Left cardiac atrium (tissue), 4 donors: ENCODE measurements at regions of chr16 and their contacts with region 1.

Region 1: DNA sequence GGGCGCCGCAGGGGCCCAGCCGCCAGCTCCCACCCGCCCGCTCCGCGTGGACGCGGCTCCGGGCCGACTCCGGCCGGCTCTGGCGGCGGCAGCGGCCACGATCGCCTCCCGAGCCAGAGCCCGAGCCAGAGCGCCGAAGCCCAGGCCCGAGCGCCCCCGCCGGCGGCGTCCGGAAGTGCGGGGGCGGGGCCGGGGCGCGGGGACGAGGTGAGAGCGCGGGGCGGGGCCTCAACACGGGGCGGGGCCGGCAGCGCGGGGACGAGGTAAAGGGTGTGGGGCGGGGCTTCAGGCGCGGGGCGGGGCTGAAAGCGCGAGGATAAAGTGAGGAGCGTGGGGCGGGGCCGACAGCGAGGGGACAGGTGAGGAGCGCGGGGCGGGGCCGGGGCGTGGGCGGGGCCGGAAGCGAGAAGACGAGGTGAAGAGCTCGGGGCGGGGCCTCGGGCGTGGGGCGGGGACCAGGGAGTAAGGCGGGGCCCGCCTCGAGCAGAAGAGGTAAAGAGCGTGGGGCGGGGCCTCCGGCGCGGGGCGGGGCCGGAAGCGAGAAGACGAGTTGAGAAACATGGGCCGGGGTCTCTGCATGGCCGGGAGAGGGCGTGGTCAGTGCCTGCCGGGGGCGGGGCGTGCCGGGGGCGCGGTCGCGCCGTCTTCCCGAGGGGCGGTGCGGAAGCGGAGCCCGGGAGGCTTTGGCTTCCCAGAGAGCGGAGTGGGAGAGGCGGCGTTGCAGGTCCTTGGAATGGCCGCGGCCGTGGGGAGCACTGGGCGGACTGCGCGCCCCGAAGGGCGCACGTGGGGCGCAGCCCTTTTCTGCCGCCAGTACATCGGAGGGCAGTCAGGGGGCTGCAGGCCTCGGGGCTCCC is at the start of gene AXIN1:
- DNase-seq: peak; percentile 100
- ATAC-seq: peak; percentile 94 to 95
- total RNA-seq, gene AXIN1: 10.9 to 12.3 TPM

Region 2: DNA sequence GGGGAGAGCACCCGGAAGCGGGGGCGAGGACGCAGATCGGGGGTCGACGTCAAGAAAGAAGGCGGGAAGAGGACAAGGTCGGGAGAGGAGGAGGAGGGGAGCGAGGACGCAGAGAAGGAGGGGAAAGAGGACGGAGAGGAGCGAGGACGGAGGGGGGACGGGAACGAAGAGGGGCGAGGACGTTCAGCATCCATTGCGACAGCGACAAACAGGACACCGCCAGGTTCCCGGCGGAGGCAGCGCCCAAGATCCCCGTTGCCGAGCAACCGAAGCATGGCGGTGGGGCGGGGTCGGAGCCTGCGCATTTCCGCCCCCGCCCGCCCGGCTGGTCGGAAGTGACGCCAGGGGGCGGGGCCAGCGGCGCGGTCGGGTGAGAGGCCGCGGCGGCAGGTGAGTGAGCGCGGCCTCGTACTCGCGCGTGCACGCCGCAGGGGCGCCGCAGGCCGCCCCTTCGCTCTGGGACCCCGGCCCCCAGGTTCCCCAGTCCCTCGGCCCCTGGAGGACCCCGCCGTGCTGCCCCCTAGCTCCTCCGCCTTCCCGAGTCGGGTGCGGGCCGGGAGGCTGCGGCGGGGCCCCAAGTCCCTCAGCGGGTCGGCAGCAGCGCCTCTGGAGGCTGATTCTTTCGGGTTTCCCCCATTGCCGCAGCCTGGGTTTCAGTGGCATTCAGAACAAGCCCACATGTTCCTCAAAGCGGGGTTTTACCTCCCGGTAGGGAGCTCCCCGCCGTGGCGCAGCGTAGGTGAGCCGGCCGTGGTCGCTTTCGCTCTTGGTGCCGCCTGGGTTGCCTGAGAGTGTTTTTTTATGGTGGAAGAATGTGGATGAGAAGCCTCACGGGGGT is 118.1 kb before region 1 on chr16 and contains the start of gene FAM234A:
- intact Hi-C with region 1: loop called in 1 of 2 experiments (anchors 5 kb)
- DNase-seq: peak; percentile 96
- ATAC-seq: peak; percentile 97
- total RNA-seq, gene FAM234A: 119 to 160 TPM

Region 3: DNA sequence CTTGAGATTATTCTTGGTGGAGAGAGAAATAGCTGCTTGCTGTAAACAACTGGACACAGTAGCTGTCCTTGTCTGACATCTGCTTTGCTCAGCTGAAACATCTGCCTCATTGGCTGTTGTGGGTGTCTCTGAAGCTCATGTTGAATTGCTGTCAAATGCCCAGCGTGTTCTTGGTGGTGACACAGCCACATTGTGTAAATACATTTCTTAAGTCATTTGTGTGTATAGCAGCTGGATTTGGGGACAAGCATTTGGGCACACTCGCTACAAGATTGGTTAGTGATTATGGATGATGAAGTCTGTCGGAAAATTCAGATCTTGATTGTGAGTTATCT is 112.9 kb before region 1 on chr16:
- intact Hi-C with region 1: loop called in 1 of 2 experiments (anchors 10 kb)
- DNase-seq: no peak
- ATAC-seq: no peak

Region 4: GRCh38 chr16:391885-392335 is 39.1 kb after region 1 on chr16:
- intact Hi-C with region 1: no loop called
- DNase-seq: peak; percentile 56
- ATAC-seq: peak; percentile 46 to 56

Region 5: GRCh38 chr16:414395-415169 is 61.8 kb after region 1 on chr16:
- intact Hi-C with region 1: no loop called
- DNase-seq: no peak
- ATAC-seq: no peak